ENCODE measurements at regions of chr10 and their contacts with region 1.

Region 1: GRCh38 chr10:119919826-119920225 is 27.3 kb downstream of the SEC23IP start:
- DNase-seq: no peak
- H3K4me3 ChIP-seq: no peak overlapping the region
- H3K27ac ChIP-seq: no peak overlapping the region
- H3K4me1 ChIP-seq: peaks cover 2% of the 10 kb centered on the region
- H3K27me3 ChIP-seq: no peaks in the 10 kb centered on the region
- CTCF ChIP-seq: no peak

Region 2: GRCh38 chr10:119602241-119603095 is 317.4 kb before region 1 on chr10:
- CTCF ChIA-PET with region 1: no interaction called
- dilution Hi-C with region 1: no loop called
- in situ Hi-C with region 1: no loop called
- intact Hi-C with region 1: no loop called
- DNase-seq: peak; percentile 27
- H3K4me3 ChIP-seq: no peak overlapping the region
- H3K27ac ChIP-seq: no peak overlapping the region
- H3K4me1 ChIP-seq: peaks cover 7% of the 10 kb centered on the region
- H3K27me3 ChIP-seq: no peaks in the 10 kb centered on the region
- CTCF ChIP-seq: peak; percentile 50 to 71

Region 3: DNA sequence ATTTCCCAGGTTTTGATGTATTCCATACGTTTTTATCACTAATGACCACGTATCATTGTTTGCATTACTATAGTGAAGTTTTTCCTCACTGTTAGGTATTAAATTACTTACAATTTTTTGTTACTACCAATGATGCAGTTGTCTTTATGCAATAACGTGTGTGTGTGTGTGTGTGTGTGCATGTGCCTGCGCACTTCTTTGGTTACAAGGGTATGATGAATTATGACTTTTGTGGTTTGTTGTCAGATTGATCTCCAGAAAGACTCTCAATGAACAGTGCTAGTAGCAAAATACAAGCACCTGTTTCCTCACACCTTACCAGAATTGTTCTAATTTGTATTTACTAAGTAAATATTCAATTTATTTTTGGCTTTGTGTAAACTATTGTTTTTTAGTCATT is 98.6 kb before region 1 on chr10:
- CTCF ChIA-PET with region 1: no interaction called
- dilution Hi-C with region 1: loop called (anchors 5 kb)
- in situ Hi-C with region 1: no loop called
- intact Hi-C with region 1: no loop called
- DNase-seq: no peak
- H3K4me3 ChIP-seq: no peak overlapping the region
- H3K27ac ChIP-seq: no peak overlapping the region
- H3K4me1 ChIP-seq: peaks cover 11% of the 10 kb centered on the region
- H3K27me3 ChIP-seq: no peaks in the 10 kb centered on the region
- CTCF ChIP-seq: no peak